Esophagus muscularis mucosa (tissue), 4 donors: ENCODE measurements at regions of chr14 and their contacts with region 1.

Region 1: DNA sequence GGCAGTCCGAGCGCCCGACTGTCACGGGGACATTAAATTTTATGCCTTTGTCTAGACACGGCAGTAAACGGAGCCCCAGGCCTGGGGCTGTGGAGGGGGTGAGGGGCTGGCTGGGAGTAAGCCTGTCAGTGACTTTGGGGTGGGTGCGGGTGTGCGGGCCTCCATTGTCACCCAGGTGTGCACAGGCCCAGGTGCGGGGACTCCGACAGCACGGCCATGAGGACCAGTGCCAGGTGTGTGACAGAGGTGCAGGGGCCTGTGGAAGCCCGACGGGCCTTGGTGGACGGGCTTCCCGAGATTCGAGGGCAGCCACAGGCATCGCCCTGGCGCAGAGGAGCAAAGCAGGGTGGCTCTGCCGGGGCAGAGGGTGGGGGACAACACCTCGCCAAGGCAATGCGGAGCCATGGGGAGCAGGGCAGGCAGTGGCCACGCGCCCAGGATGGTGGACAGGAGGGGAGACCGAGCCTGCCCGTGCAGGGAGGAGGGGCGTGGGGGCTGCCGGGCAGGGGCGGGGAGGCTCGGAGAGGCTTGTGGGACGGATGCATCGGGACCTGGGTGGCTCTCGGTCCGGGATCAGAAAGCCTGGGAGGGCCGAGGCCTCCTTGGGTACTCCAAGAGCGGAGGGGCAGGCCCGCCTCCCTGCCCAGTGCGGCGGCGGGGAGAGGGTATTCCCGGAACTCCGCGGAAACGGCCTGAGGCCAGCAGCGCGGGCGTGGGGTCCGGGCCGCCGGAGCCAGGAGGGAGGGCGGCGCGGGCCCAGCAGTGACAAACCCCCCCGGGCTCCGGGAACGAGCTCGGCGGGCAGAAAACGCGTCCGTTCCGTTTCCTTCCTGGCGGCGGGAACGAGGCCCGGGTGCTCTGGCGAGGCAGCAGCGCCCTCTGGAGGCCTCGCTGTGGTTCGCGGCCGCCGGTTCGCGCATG is 1.5 kb downstream of the TMEM121 start:
- DNase-seq: no peak
- H3K4me3 ChIP-seq: peak overlapping the region; percentile 66 to 83 (median 77)
- H3K27ac ChIP-seq: peak overlapping the region; percentile 62 to 81 (median 72)
- H3K4me1 ChIP-seq: peaks cover 27 to 49% (median 40%) of the 10 kb centered on the region in 4 donors
- H3K27me3 ChIP-seq: peaks cover 0 to 11% (median 0%) of the 10 kb centered on the region in 4 donors
- CTCF ChIP-seq: peak; percentile 84 to 94 (median 90)
- EP300 ChIP-seq: no peak
- POLR2A ChIP-seq: no peak

Region 2: GRCh38 chr14:105281371-105282097 is 246.4 kb before region 1 on chr14:
- intact Hi-C with region 1: no loop called
- DNase-seq: no peak
- H3K4me3 ChIP-seq: no peak overlapping the region
- H3K27ac ChIP-seq: no peak overlapping the region
- H3K4me1 ChIP-seq: peaks cover 5 to 28% (median 23%) of the 10 kb centered on the region in 4 donors
- H3K27me3 ChIP-seq: no peaks in the 10 kb centered on the region
- CTCF ChIP-seq: peak; percentile 54 to 62 (median 57)
- EP300 ChIP-seq: no peak
- POLR2A ChIP-seq: no peak

Region 3: DNA sequence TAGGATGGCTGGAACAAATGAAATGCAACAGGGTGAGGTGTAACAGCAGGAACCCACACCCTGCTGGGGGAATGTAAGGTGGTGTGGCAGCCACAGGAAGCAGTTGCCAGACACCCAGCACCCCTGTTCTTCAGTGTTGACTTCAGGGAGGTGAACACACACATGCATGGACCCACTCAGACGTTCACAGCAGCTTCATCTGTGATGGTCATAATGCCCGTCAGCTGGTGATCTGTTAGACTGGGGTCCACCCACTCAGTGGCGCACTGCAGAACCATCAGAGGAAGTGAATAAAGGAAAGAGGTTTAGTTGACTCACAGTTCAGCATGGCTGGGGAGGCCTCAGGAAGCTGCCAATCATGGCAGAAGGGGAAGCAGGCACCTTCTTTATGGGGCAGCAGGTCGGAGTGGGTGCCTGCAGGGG is 152.3 kb before region 1 on chr14:
- intact Hi-C with region 1: loop called (anchors 1 kb)
- DNase-seq: no peak
- H3K4me3 ChIP-seq: no peak overlapping the region
- H3K27ac ChIP-seq: no peak overlapping the region
- H3K4me1 ChIP-seq: peaks cover 0 to 6% (median 2%) of the 10 kb centered on the region in 4 donors
- H3K27me3 ChIP-seq: no peaks in the 10 kb centered on the region
- CTCF ChIP-seq: no peak
- EP300 ChIP-seq: no peak
- POLR2A ChIP-seq: no peak